ENCODE measurements at regions of chr3 and their contacts with region 1.

Region 1: DNA sequence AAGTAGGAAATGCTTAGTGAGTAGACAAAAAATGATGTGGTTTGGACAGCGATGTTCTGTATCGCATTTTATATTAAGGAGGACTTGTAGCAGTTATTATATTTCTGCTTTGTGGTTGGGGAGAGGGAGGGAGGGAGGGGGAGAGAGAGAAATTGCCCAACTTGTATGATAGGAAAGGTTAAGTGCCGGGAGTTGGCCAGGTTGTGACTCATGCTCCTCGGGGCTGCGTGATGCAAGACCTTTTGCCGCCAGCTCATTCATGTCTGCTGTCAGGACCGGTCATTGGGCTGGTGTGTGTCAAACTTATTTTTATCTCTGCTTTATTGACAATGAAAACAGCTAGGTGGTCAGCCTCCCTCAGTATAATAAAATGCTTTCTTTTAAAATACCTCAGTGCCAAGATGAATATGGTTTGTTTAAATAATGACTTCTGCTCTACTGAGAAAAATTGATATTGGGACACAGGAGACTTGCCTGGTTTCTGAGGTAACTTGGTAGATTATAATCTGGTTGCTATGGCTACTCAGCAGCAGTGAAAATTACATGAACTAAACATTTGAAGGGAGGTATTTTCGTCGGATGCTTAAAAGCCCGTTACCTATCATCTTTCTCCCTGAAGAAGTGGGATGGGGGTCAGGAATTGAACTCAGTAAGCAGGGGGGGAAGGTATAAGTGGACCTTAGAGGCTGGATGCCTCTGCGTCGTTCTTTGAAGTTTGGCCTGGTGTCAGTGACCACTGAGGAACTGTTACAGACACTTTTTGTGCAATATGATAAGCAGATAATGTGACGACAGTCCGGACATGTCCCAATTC is 90.7 kb downstream of the FNDC3B start:
- DNase-seq: peak; percentile 70 to 74
- ATAC-seq: peak; percentile 68 to 80 (median 68)
- H3K4me3 ChIP-seq: no peak overlapping the region
- H3K4me3 Mint-ChIP-seq: peak overlapping the region; percentile 87
- H3K27ac ChIP-seq: peak overlapping the region; percentile 94
- H3K27ac Mint-ChIP-seq: peak overlapping the region; percentile 88 to 99
- H3K4me1 ChIP-seq: peaks cover 47% of the 10 kb centered on the region
- H3K4me1 Mint-ChIP-seq: peaks cover 82 to 83% of the 10 kb centered on the region in 2 donors
- H3K27me3 ChIP-seq: no peaks in the 10 kb centered on the region
- H3K27me3 Mint-ChIP-seq: no peaks in the 10 kb centered on the region
- CTCF ChIP-seq: no peak

Region 2: GRCh38 chr3:172094621-172095557 is 35.2 kb before region 1 on chr3:
- intact Hi-C with region 1: loop called (anchors 5 kb)
- DNase-seq: peak; percentile 25 to 61
- ATAC-seq: peak; percentile 82 to 93 (median 90)
- H3K4me3 ChIP-seq: no peak overlapping the region
- H3K4me3 Mint-ChIP-seq: peak overlapping the region; percentile 67
- H3K27ac ChIP-seq: peak overlapping the region; percentile 62
- H3K27ac Mint-ChIP-seq: peak overlapping the region; percentile 80 to 92
- H3K4me1 ChIP-seq: peaks cover 17% of the 10 kb centered on the region
- H3K4me1 Mint-ChIP-seq: peaks cover 79 to 80% of the 10 kb centered on the region in 2 donors
- H3K27me3 ChIP-seq: no peaks in the 10 kb centered on the region
- H3K27me3 Mint-ChIP-seq: no peaks in the 10 kb centered on the region
- CTCF ChIP-seq: no peak

Region 3: DNA sequence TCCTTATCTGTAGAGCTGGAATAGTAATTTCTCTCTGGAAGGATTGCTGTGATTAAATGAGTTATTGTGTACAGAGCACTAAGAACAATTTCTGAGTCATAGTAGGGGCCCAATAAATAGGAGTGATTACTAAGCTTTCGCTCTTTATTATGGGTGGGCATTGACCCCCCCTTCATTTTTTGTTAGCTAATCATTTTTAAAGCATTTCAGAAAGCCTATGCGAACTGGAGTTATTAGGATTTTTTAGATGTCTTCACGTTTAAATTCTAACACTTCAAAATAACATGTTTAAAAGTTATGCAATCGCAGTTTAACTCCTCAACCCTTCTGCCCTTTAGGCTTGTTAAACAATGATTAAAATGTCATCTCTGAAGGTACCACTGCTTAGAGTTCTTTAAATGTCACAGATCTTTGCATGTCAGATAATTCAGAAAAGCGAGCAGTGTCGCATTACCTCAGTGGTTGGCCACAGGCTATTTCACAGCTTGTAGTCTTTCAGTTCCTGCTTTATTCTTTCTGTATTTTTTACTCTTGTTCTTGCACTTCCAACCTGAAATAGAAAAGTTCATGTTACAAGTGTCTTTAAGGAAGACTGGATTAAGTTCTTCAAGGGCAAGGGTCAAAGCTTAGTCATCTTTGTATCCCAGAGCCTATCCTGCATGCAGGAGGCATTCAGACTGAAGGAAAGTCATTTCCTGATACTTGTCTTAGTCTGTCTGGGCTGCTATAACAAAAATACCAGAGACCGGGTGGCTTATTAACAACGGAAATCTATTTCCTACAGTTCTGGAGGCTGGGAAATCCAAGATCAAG is 12.2 kb after region 1 on chr3:
- intact Hi-C with region 1: loop called (anchors 2 kb)
- DNase-seq: no peak
- ATAC-seq: peak; percentile 22 to 47 (median 43)
- H3K4me3 ChIP-seq: no peak overlapping the region
- H3K4me3 Mint-ChIP-seq: peak overlapping the region; percentile 78
- H3K27ac ChIP-seq: peak overlapping the region; percentile 72
- H3K27ac Mint-ChIP-seq: peak overlapping the region; percentile 82 to 88
- H3K4me1 ChIP-seq: peaks cover 51% of the 10 kb centered on the region
- H3K4me1 Mint-ChIP-seq: peaks cover 87 to 88% of the 10 kb centered on the region in 2 donors
- H3K27me3 ChIP-seq: no peaks in the 10 kb centered on the region
- H3K27me3 Mint-ChIP-seq: no peaks in the 10 kb centered on the region
- CTCF ChIP-seq: no peak

Region 4: DNA sequence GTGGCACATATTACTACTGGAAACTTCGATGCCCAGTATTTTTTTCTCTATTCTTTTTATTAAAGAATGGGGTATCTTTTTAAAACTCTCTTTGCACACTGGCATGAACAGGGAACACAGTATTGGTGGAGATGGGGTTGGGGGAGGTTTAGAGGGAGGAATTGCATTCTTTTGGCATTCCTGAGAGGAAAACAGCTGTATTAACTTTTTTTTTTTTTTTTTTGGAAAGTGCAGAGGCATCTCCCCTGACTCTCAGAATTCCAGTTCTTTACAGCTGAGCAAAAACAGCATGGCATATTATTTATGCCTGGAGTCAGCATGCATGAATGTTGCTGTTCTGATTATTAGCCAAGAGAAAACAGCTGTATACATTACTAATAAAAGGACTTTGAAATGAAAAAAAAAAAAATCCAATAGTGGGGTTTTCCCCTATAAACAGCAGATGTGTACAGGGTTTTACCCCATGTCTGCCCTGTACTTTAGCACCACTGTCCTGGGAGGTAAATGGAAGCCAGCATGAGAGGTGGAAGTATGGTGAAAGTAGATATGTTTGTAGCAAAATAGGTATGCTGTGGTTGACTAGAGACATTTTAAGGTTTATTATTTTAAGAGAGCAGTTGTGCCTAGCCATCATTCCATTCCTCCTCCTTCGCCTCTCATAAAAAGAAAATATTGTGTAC is 41.5 kb after region 1 on chr3:
- intact Hi-C with region 1: loop called (anchors 2 kb)
- DNase-seq: no peak
- ATAC-seq: no peak
- H3K4me3 ChIP-seq: no peak overlapping the region
- H3K4me3 Mint-ChIP-seq: no peak overlapping the region
- H3K27ac ChIP-seq: no peak overlapping the region
- H3K27ac Mint-ChIP-seq: no peak overlapping the region
- H3K4me1 ChIP-seq: peaks cover 19% of the 10 kb centered on the region
- H3K4me1 Mint-ChIP-seq: peaks cover 76 to 78% of the 10 kb centered on the region in 2 donors
- H3K27me3 ChIP-seq: no peaks in the 10 kb centered on the region
- H3K27me3 Mint-ChIP-seq: no peaks in the 10 kb centered on the region
- CTCF ChIP-seq: no peak

Region 5: DNA sequence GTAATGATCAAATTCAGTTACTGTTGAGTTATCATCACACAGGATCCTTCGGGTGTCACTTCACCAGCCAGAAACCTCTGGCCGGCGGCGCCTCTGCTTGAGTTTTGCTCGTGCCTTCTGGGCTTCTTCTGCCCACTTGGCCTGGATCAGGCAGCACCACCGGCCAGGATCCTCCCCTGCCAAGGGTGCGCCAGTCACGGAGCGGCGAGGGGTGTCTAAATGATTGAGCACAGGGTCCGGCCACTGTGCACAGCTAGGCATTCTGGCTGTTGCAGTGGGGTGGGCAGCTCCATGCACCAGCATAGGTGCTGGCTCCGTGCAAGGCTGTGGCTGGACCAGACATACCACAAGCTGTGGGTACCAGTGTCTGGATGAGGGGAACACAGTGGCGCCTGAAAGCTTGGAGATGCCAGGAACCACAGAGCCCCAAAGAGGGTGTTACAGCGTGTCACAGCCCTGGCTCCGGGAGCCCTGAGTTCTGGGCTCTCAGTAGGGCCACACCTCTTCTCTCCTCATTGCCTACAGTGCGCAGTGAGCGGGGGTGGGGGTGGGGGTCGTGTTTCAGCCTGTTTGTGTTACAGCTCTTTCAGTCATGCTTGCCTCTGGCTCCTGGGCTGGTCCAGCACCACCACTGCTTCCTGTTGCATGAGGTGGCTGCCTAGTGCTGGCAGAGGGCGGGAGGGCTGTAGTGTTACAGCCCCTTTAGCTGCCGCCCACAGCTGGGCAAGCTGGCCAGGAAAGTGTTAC is 78.7 kb after region 1 on chr3:
- intact Hi-C with region 1: loop called (anchors 5 kb)
- DNase-seq: peak in 1 of 2 donors; percentile 23
- ATAC-seq: peak; percentile 73 to 78 (median 76)
- H3K4me3 ChIP-seq: no peak overlapping the region
- H3K4me3 Mint-ChIP-seq: peak overlapping the region; percentile 62
- H3K27ac ChIP-seq: peak overlapping the region; percentile 46
- H3K27ac Mint-ChIP-seq: peak overlapping the region; percentile 68 to 86
- H3K4me1 ChIP-seq: peaks cover 18% of the 10 kb centered on the region
- H3K4me1 Mint-ChIP-seq: peaks cover 69 to 72% of the 10 kb centered on the region in 2 donors
- H3K27me3 ChIP-seq: no peaks in the 10 kb centered on the region
- H3K27me3 Mint-ChIP-seq: no peaks in the 10 kb centered on the region
- CTCF ChIP-seq: no peak